ENCODE measurements at regions of chrX and their contacts with region 1.

Region 1: GRCh38 chrX:12946838-12947544 is 27.9 kb upstream of the TMSB4X start:
- DNase-seq: peak; percentile 58
- H3K4me3 ChIP-seq: no peak overlapping the region
- H3K27ac ChIP-seq: peak overlapping the region; percentile 52
- H3K27me3 ChIP-seq: no peaks in the 10 kb centered on the region
- CTCF ChIP-seq: peak; percentile 95

Region 2: DNA sequence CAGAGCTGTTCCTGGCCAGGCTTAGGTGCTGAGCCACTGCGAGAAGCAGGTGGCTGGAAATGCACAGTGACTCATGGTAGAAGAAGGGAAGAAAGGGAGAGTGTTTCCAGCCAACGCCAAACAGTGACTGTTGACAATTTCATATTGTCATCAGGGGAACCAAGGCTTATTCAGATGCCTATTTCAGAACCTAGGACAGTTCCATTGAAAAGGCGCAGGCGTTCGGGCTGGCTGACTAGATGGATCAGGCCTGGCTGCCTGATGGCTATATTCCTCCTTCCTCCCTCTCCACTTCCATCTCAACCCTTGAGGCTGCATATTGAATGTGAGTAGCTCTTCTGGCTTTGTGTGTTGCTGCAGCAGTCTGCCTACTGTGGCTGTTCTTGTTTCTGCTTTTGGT is 881.7 kb before region 1 on chrX:
- CTCF ChIA-PET with region 1: no interaction called
- POLR2A ChIA-PET with region 1: no interaction called
- DNase-seq: no peak
- H3K4me3 ChIP-seq: no peak overlapping the region
- H3K27ac ChIP-seq: no peak overlapping the region
- H3K27me3 ChIP-seq: no peaks in the 10 kb centered on the region
- CTCF ChIP-seq: no peak

Region 3: GRCh38 chrX:12115377-12115776 is 831.6 kb before region 1 on chrX:
- CTCF ChIA-PET with region 1: no interaction called
- POLR2A ChIA-PET with region 1: no interaction called
- DNase-seq: no peak
- H3K4me3 ChIP-seq: no peak overlapping the region
- H3K27ac ChIP-seq: no peak overlapping the region
- H3K27me3 ChIP-seq: no peaks in the 10 kb centered on the region
- CTCF ChIP-seq: no peak

Region 4: GRCh38 chrX:12936947-12937346 is 10.0 kb before region 1 on chrX:
- CTCF ChIA-PET with region 1: interaction called, 30 read pairs
- POLR2A ChIA-PET with region 1: no interaction called
- DNase-seq: no peak
- H3K4me3 ChIP-seq: no peak overlapping the region
- H3K27ac ChIP-seq: no peak overlapping the region
- H3K27me3 ChIP-seq: no peaks in the 10 kb centered on the region
- CTCF ChIP-seq: no peak

Region 5: DNA sequence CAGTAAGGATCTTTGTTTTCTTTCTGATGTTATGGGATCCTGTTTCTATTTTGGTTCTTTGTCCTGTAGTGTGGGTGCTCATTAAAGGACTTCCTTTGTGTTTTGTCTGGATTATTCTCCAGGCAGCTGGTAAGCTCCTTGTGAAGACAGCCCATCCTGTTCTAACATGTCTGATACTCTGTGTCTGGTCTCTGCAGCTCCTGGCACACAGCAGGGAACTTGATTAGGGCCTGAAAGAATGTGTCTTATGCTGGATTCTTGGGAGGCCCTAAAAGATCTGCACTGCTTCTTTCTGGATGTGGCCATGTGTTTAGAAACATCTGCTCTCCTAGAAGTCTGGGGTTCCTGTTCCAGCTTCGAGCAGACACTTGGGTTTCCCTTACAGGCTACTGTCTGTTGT is 410.9 kb after region 1 on chrX:
- CTCF ChIA-PET with region 1: interaction called, 10 read pairs
- POLR2A ChIA-PET with region 1: no interaction called
- DNase-seq: no peak
- H3K4me3 ChIP-seq: no peak overlapping the region
- H3K27ac ChIP-seq: peak overlapping the region; percentile 11
- H3K27me3 ChIP-seq: no peaks in the 10 kb centered on the region
- CTCF ChIP-seq: no peak

Region 6: GRCh38 chrX:13487731-13488523 is 540.9 kb after region 1 on chrX:
- CTCF ChIA-PET with region 1: interaction called, 87 read pairs
- POLR2A ChIA-PET with region 1: interaction called, 5 read pairs
- DNase-seq: peak; percentile 75
- H3K4me3 ChIP-seq: no peak overlapping the region
- H3K27ac ChIP-seq: peak overlapping the region; percentile 99
- H3K27me3 ChIP-seq: no peaks in the 10 kb centered on the region
- CTCF ChIP-seq: peak; percentile 50

Measured in AG04450 (cell line).